CD8-positive, alpha-beta T cell (primary cell): ENCODE measurements at regions of chr18 and their contacts with region 1.

Region 1: GRCh38 chr18:24051031-24051947 is 36.7 kb downstream of the TTC39C start:
- DNase-seq: no peak
- ATAC-seq: no peak
- H3K4me3 ChIP-seq: no peak overlapping the region
- H3K4me3 Mint-ChIP-seq: peak overlapping the region; percentile 8
- H3K27ac ChIP-seq: no peak overlapping the region
- H3K27ac Mint-ChIP-seq: peak overlapping the region; percentile 67
- H3K4me1 ChIP-seq: peaks cover 63% of the 10 kb centered on the region
- H3K4me1 Mint-ChIP-seq: peaks cover 84% of the 10 kb centered on the region
- H3K27me3 ChIP-seq: no peaks in the 10 kb centered on the region
- H3K27me3 Mint-ChIP-seq: no peaks in the 10 kb centered on the region
- CTCF ChIP-seq: no peak

Region 2: DNA sequence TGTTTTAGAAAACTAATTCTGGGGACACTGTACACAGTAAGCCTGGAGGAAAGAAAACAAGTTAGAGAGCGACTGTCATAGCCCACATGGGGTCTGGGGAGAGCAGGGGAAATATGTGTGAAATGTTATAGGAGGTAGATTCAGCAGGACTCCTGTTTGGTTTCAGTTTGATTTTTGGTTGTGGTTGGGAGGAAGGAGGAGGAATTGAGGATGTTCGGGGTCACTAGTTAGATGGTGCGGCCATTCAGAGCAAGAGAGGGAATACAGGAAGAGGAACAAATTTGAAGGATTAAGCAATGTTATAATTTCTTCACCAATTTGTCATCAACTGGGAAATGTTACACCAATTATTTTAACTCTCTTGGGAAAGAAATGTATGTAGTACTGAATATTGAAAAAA is 11.6 kb before region 1 on chr18:
- CTCF ChIA-PET with region 1: no interaction called
- POLR2A ChIA-PET with region 1: no interaction called
- intact Hi-C with region 1: loop called in 1 of 2 experiments (anchors 2 kb)
- DNase-seq: no peak
- ATAC-seq: peak; percentile 26
- H3K4me3 ChIP-seq: no peak overlapping the region
- H3K4me3 Mint-ChIP-seq: peak overlapping the region; percentile 4
- H3K27ac ChIP-seq: no peak overlapping the region
- H3K27ac Mint-ChIP-seq: peak overlapping the region; percentile 47
- H3K4me1 ChIP-seq: peaks cover 55% of the 10 kb centered on the region
- H3K4me1 Mint-ChIP-seq: peaks cover 95% of the 10 kb centered on the region
- H3K27me3 ChIP-seq: no peaks in the 10 kb centered on the region
- H3K27me3 Mint-ChIP-seq: no peaks in the 10 kb centered on the region
- CTCF ChIP-seq: no peak

Region 3: GRCh38 chr18:24068945-24069693 is 17.8 kb after region 1 on chr18:
- CTCF ChIA-PET with region 1: no interaction called
- POLR2A ChIA-PET with region 1: interaction called, 3 read pairs
- intact Hi-C with region 1: loop called in 1 of 2 experiments (anchors 2 kb)
- DNase-seq: no peak
- ATAC-seq: no peak
- H3K4me3 ChIP-seq: no peak overlapping the region
- H3K4me3 Mint-ChIP-seq: no peak overlapping the region
- H3K27ac ChIP-seq: no peak overlapping the region
- H3K27ac Mint-ChIP-seq: peak overlapping the region; percentile 20
- H3K4me1 ChIP-seq: peaks cover 12% of the 10 kb centered on the region
- H3K4me1 Mint-ChIP-seq: peaks cover 50% of the 10 kb centered on the region
- H3K27me3 ChIP-seq: no peaks in the 10 kb centered on the region
- H3K27me3 Mint-ChIP-seq: no peaks in the 10 kb centered on the region
- CTCF ChIP-seq: no peak